Psoas muscle (tissue), 8 donors: ENCODE measurements at regions of chr18 and their contacts with region 1.

Region 1: GRCh38 chr18:5237723-5238370 is 40.8 kb upstream of the AKAIN1 start:
- DNase-seq: peak; percentile 91 to 94
- ATAC-seq: peak; percentile 97
- H3K4me3 ChIP-seq: peak overlapping the region; percentile 93
- H3K27ac ChIP-seq: peak overlapping the region; percentile 99
- H3K4me1 ChIP-seq: peaks cover 38% of the 10 kb centered on the region
- H3K27me3 ChIP-seq: no peaks in the 10 kb centered on the region
- CTCF ChIP-seq: peak; percentile 52

Region 2: GRCh38 chr18:5036523-5036922 is 201.3 kb before region 1 on chr18:
- intact Hi-C with region 1: no loop called
- DNase-seq: no peak
- ATAC-seq: no peak
- H3K4me3 ChIP-seq: no peak overlapping the region
- H3K27ac ChIP-seq: no peak overlapping the region
- H3K4me1 ChIP-seq: no peaks in the 10 kb centered on the region
- H3K27me3 ChIP-seq: no peaks in the 10 kb centered on the region
- CTCF ChIP-seq: no peak

Region 3: DNA sequence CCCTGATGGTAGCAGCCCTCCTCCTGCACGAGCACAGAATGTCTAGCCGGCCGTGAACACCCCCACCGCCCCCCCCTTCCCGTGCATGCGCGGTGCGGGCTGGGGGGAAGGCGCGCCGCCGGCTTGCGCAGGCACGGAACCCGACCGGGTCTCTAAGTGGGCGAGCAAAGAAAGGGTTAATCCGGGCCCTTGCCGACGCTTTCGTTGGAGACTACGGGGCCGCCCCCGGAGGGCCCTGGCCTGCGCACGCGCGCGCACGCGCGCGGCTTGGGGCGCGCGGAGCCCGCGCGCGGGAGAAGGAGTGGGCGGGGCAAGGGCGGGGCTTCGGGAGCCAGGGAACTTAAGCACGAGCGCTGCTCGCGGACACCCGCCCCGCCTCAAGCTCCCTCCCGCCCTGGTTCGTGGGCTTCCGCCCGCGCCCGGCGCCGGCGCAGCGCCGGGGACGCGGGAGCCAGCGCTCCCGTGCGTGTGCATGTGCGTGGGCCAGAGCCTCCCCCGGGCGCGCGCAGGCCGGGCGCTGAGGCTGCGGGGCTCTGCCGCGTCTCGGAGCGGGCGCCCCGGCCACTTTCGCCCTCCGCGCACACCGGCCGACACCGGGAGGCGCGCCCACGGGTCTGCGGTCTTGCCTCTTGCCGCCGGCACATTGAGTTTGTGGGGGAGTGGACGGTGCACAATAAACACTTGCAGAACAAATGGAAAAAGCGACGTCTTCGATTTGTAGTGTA is 58.3 kb after region 1 on chr18:
- intact Hi-C with region 1: loop called (anchors 1 to 2 kb)
- DNase-seq: peak; percentile 96 to 98
- ATAC-seq: peak; percentile 91 to 94 (median 92)
- H3K4me3 ChIP-seq: peak overlapping the region; percentile 74
- H3K27ac ChIP-seq: peak overlapping the region; percentile 87
- H3K4me1 ChIP-seq: peaks cover 11% of the 10 kb centered on the region
- H3K27me3 ChIP-seq: no peaks in the 10 kb centered on the region
- CTCF ChIP-seq: no peak